AG04449 (cell line): ENCODE measurements at regions of chr21 and their contacts with region 1.

Region 1: DNA sequence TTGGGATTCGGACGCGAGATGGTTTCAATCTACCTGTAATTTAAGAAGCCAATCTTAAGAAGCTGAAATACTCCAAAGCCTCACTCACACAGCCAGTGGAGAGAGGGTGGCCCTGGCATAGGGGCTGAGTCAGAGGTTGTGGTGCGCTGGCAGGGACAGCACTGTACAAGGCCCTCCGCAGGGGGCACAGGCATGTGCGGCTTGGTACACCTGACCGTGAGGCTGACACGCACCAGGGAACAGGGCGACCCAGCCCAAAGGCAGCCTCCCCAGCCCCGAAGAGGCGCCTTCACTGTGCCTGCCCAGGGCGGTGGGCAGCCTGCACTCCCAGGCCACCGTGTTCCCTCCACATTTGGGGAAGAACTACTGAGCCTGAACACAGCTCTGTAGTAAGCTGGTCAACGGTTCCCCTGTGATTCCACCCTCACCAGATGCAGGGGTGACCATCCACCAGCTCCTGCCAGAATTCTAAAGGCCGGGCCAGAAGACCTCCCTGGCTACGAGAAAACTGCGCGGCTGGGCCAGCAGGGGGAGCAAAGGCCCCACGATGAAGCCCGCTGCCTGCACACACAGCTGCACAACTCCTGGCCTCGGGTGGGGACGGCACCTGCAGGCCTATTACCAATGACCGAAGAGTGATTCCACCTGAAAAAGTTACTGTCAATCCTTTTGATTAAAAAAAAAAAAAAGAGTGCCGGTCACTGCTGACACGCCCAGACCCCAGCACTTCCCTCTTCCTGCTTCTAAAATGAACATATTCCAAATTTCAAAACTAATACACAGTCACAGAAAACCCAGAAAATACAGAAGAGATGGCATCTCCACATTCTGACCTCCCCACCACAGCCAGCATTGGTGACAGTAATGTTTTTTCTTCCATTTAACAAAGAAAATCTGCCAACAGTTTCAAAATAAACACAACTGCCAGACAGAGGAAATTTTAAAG is 49.6 kb upstream of the RIPK4 start:
- DNase-seq: no peak
- H3K4me3 ChIP-seq: no peak overlapping the region
- CTCF ChIP-seq: peak; percentile 94

Region 2: DNA sequence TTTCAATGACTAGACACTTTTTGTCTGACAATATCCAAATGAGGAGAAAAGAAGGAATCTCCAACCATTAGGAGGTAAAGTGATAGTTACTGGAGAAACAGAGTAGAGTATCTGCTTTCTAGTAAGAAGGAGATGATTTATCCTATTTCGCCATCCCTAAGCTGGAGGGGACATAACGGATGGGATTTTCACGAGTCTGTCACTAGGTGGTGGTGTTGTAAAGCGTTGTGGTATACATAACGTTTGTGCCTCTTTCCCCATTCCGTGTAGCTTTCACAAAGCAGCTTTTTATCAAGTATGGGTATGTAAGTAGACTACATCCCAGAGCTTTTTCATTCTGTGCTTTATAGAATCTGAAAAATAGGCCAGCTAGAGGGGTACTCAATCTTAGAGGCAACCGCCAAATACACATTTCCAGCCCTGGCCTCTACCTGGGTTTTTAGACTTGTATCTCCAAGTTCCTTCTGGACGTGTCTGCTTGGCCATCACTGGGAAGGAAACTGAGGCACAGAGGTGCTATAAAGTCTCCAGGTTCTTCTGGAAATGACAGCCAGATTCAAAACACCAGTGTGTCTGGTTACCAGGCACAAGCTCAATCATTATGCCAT is 533.2 kb before region 1 on chr21:
- CTCF ChIA-PET with region 1: interaction called, 66 read pairs
- POLR2A ChIA-PET with region 1: no interaction called
- DNase-seq: peak; percentile 45
- H3K4me3 ChIP-seq: no peak overlapping the region
- CTCF ChIP-seq: peak; percentile 74

Region 3: DNA sequence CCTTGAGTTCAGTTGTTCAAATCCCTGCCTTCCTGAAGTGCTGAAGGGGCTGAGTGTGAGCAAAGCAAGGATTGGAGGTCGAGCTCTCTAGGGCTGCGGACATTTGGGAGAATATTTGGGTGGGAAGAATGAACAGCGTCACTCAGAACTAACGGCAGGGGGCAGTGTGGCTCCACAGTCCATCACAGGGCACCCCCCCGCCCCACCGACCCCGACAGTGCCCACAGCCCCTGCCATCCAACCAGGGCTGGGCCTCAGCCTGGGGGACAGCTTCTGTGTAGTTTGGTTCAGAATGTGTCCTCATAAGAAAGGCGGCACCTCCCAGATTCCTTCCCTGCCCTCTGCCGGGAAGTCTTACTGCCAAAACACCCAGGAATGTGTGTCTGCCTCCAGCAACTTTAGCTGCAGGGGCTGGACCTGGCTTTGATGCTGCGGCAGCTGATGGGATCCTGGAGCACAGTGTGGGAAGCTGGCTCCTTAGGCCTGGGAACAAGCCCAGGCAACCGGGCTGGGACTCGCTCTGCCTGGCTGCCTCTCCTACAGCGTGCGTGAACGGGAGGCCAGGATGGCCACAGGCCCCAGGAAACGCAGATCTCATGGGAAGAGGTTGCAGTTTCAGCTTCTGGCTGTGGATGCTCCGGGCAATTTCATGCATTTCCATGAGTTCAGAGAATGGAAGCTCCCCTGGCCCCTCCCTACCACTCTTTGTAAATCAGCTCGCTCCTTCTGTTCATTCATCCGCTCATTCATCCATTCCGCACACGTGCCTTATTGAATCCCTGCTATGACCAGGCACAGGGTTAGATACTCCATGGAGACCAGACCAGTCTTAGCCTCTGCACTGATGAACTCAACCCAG is 203.6 kb before region 1 on chr21:
- CTCF ChIA-PET with region 1: interaction called, 256 read pairs
- POLR2A ChIA-PET with region 1: interaction called, 3 read pairs
- DNase-seq: peak; percentile 97
- H3K4me3 ChIP-seq: no peak overlapping the region
- CTCF ChIP-seq: peak; percentile 76

Region 4: GRCh38 chr21:41768437-41769061 is 47.9 kb before region 1 on chr21:
- CTCF ChIA-PET with region 1: interaction called, 18 read pairs
- POLR2A ChIA-PET with region 1: no interaction called
- DNase-seq: peak; percentile 24
- H3K4me3 ChIP-seq: peak overlapping the region; percentile 48
- CTCF ChIP-seq: peak; percentile 58

Region 5: DNA sequence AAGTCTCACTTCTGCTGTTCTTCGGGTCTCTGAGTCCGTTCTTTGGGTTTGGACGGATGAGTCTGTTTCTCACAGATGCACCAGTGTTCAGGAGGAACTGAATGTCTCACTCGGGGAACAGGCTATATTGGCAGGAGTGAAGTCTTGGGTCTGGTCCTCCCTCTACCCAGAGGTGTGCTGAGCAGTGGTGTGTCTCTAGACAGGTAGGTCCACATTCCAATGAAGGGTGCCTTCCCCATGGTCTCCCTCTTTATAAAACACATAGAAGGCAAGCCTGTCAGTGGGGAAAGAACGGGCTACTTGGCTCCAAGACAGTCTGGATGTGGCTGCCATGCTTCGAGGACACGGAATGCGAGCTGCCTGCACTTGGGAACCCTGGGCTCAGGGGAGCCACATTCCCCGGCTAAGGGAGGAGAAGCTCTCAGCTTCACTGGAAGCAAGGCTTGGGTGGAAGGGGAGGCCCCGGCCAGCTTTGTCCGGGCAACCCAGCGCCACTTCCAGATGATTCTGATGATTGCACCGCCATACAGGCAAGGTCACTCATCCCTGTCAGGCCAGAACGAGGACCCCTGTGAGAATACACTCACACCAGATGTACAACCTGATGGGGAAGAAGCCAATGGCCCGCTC is 19.9 kb before region 1 on chr21:
- CTCF ChIA-PET with region 1: interaction called, 22 read pairs
- POLR2A ChIA-PET with region 1: no interaction called
- DNase-seq: no peak
- H3K4me3 ChIP-seq: no peak overlapping the region
- CTCF ChIP-seq: no peak

Region 6: DNA sequence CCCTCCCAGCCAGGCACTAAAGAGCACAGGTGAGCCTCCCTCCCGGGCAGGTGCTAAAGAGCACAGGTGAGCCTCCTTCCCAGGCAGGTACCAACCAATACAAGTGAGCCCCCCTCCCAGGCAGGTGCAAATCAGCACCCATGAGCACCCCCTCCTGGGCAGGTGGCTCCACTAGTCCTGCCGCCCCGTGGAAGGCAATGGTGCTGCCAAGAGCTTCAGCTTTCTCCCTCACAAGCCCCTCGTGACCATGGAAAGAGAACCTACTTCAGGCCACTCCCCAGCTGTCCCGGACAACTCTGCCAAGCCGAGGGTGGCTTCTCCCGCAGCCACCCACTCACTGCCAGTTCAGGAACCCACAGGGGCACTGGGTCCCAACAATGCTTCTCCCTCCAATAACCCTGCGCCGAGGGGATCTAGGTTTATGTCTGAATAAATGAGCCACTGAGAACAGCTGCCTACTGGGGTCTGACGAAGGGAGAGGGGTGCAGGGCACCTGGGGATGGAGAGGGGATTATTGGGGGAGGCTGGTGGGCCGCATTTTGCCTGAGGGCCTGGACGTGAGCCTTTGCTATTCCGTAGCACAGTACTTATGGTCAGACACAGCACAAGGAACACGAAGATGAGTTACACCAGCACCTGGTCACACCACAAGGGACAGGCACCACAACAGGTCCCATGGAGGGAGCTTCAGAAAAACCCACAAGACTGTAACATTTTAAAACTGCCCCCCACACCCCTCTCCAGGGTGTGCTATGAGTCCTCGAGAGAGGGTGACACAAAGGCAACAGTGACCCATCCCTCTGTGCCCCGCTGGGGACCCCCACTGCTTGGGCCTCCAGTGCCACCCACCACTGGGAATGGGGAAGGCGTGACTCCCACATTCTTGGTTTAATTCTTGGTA is 16.4 kb after region 1 on chr21:
- CTCF ChIA-PET with region 1: interaction called, 16 read pairs
- POLR2A ChIA-PET with region 1: no interaction called
- DNase-seq: no peak
- H3K4me3 ChIP-seq: no peak overlapping the region
- CTCF ChIP-seq: no peak

Region 7: DNA sequence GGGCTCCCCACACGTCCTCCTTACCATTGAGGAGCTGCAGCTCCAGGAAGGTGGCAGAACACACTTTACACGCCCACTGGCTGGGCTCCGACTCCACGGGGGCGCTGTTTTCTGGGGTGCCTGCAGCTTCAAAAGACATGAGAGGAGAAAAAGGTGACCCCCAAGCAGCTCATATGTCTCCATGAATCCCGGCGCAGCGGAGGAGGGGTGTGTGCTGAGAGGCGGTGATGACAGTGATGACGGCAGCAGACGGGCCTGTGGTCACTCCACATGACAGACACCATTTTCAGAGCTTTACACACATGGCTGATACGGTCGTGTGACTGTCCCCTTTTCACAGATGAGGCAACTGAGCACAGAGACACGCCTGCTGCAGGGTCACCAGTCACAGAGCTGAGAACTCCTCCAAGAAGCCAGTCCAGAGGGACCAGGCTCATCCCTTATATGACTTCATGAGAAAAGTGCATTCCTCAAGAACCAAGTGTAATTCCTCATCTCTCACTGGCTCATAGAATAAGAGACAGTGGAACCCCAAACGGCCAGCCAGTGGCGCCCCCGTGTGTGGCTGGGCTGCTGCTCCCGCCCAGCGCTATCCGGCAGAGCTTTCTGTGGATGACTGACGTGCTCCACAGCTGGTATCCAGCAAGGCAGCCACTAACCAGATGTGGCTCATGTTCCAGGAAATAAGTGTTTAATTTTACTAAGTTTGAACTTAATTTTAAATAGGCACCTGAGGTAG is 30.7 kb after region 1 on chr21:
- CTCF ChIA-PET with region 1: interaction called, 10 read pairs
- POLR2A ChIA-PET with region 1: no interaction called
- DNase-seq: no peak
- H3K4me3 ChIP-seq: no peak overlapping the region
- CTCF ChIP-seq: peak; percentile 48